Cardiac septum (tissue), 1 donor: ENCODE measurements at regions of chr4 and their contacts with region 1.

Region 1: DNA sequence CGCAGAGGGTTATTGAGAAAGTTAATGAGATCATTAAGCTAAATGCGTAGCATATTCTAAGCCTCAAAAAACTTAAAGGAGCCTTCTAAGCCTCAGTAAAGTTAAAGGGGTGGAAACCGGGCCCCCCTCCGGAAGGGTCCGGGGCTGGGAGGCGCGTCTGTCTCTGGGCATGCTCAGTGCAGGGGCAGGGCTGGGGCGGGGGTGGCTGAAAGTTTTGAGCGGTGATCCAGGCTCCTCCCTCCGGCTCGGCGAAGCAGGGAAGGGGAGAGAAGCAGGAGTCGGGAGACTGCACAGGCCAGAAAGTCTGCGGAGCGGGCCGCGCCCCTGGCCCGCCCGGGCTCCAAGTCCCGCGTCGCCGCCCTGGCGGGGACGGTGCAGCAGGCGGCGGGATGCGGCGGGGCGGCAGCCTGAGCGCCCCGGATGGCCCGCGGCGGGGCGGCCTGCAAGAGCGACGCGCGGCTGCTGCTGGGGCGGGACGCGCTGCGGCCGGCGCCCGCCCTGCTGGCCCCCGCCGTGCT is at the start of gene EVC:
- DNase-seq: peak; percentile 88
- total RNA-seq, gene EVC: 8.7 TPM

Region 2: DNA sequence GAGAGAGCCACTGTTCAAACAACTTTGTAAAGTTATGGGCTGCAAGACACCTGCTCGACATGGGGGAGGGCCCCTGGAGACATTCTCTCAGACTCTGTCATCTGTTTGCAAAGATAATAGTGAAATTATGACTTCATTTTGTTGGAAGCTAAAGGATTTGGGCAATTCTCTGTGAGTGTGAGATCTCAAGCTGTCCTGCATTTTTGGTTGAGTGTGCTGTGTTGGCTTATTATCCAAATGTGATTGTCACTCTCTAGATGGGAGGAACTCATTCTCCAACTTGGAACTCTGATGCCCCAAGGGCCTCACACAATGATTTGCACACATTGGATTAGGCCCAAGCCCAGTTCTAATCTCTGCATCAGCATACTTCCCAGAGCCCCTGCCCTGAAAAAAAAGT is 596.1 kb before region 1 on chr4:
- intact Hi-C with region 1: no loop called
- DNase-seq: no peak

Region 3: GRCh38 chr4:5749568-5749967 is 38.5 kb after region 1 on chr4:
- intact Hi-C with region 1: loop called (anchors 1 kb)
- DNase-seq: no peak